ENCODE measurements at regions of chr5 and their contacts with region 1.

Region 1: DNA sequence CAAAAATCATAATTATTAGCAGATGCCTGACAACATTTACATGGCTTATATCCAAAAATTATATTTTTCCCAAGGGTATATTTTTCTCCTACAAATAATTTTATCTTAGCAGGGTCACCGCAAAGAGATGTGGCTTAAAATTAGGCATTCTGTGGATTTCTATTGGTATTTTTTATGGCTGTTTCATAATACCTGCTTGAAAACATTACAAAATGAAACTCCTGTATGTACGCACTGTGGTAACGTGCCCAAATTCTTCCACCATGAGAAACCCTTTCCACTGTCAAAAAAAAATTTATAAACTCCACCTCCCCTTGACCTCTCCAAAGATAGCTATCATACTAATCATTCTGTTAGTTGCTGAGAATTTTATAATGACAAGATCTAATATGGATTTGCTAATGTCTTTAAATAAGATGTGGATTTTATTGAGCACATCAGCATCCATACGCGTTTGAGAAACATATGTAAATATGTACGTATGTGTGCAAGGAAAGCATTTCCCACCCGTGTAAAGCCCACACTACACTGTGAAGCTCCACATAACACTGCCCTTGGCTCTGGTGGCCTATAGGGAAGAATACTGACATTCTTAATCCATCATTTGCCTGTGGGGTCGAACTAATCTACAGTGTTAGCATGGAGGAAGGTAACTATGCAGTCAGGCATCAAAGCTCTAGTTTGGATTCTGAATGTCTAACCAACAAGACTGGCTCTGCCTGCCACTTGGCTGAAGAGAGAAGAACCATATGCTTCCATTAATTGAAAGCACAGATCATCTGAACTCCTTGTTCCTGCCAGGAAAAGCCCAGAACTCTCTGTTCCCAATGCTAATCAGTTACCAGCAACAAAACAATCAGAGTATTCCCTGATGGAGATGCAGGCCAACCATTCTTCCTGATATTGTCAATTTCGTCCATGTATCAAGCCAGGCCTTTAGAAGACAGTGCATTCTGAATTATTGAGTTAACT is 244.7 kb downstream of the SPOCK1 start:
- DNase-seq: no peak
- H3K4me3 ChIP-seq: no peak overlapping the region
- H3K27ac ChIP-seq: no peak overlapping the region
- H3K27me3 ChIP-seq: peaks cover 2% of the 10 kb centered on the region
- CTCF ChIP-seq: no peak

Region 2: DNA sequence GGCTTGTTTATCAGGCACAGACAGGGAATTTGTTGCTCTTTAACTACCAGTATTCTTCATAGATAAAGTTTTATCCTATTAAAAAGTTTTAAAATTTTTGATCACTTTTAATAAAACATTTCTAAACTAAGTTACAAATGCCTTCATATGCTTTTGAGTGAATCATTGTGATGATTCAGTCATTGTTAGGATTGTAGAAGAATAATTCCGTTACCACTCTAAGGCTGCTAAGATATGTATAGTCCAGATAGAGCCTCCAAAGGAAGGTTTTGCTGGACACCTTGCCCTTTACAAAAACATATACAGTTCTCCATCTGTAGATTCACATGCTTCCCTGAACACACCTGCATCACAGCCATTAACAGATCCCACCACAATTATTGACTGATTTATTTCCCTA is 11.1 kb after region 1 on chr5:
- CTCF ChIA-PET with region 1: interaction called, 13 read pairs
- POLR2A ChIA-PET with region 1: no interaction called
- DNase-seq: no peak
- H3K4me3 ChIP-seq: no peak overlapping the region
- H3K27ac ChIP-seq: no peak overlapping the region
- H3K27me3 ChIP-seq: no peaks in the 10 kb centered on the region
- CTCF ChIP-seq: no peak

Region 3: GRCh38 chr5:137344723-137345322 is 90.4 kb after region 1 on chr5:
- CTCF ChIA-PET with region 1: no interaction called
- POLR2A ChIA-PET with region 1: no interaction called
- DNase-seq: peak; percentile 27
- H3K4me3 ChIP-seq: no peak overlapping the region
- H3K27ac ChIP-seq: no peak overlapping the region
- H3K27me3 ChIP-seq: peaks cover 4% of the 10 kb centered on the region
- CTCF ChIP-seq: peak; percentile 95

Region 4: DNA sequence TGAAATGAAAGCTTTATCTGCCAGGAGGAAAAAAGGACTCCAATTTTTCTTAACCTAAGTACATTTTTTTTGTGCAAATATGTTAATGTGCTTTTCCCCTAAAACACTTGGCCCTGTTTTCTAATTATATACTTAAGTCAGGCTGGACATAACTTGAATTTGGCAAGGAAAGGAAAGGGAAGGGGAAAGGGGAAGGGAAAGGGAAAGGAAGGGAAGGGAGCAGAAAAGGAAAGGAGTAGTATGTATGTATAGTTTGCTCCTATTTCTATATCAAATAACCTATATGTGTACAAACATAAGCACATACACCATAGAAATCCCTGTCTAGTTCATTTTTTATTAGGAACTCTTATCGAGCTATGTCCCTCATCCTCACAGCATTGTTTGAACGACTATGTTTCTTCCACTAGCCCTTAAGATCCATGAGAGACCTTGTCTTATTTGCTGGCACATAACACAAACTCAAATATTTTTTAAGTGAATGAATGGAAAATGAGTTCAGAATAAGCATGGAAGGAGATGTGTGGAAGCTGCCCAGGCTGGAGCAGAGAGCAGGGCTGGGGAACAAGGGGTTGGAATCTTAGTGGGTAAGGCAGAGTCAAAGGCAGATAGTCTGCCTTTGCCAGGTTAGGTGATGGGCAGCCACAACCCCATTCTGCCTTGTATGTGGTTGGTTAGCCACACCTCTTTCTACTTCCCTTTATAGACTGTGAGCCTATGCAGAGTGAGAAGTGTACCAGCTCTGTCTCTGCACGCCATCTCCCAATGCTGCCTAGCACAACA is 411.5 kb after region 1 on chr5:
- CTCF ChIA-PET with region 1: no interaction called
- POLR2A ChIA-PET with region 1: no interaction called
- DNase-seq: no peak
- H3K4me3 ChIP-seq: no peak overlapping the region
- H3K27ac ChIP-seq: no peak overlapping the region
- H3K27me3 ChIP-seq: no peaks in the 10 kb centered on the region
- CTCF ChIP-seq: no peak